CD4-positive, alpha-beta T cell (primary cell): ENCODE measurements at regions of chr9 and their contacts with region 1.

Region 1: DNA sequence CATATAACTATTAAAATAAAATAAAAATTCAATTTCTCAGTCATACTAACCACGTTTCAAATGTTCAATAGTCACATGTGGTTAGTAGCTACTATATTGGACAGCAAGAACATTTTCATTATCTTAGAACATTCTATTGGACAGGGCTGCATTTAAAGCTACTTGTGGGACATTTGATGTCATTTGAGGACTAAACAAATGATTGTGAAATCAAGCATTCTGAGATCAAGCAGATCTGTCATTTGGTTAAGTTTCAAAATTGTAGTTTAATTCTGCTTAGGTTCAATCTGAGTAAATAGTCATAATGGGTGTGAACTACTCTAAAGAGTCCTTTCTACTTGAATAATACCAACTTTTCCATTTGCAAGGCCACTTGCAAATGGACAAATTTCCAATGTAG is 226.9 kb upstream of the C9orf72 start:
- DNase-seq: no peak
- ATAC-seq: no peak
- H3K4me3 ChIP-seq: no peak overlapping the region
- H3K4me3 Mint-ChIP-seq: no peak overlapping the region
- H3K27ac ChIP-seq: no peak overlapping the region
- H3K27ac Mint-ChIP-seq: no peak overlapping the region
- H3K4me1 ChIP-seq: no peaks in the 10 kb centered on the region
- H3K4me1 Mint-ChIP-seq: no peaks in the 10 kb centered on the region
- H3K27me3 ChIP-seq: no peaks in the 10 kb centered on the region
- H3K27me3 Mint-ChIP-seq: peaks cover 9% of the 10 kb centered on the region
- CTCF ChIP-seq: no peak

Region 2: GRCh38 chr9:27749838-27750237 is 50.3 kb before region 1 on chr9:
- CTCF ChIA-PET with region 1: no interaction called
- POLR2A ChIA-PET with region 1: no interaction called
- intact Hi-C with region 1: loop called in 1 of 2 experiments (anchors 10 kb)
- DNase-seq: no peak
- ATAC-seq: no peak
- H3K4me3 ChIP-seq: no peak overlapping the region
- H3K4me3 Mint-ChIP-seq: no peak overlapping the region
- H3K27ac ChIP-seq: no peak overlapping the region
- H3K27ac Mint-ChIP-seq: no peak overlapping the region
- H3K4me1 ChIP-seq: no peaks in the 10 kb centered on the region
- H3K4me1 Mint-ChIP-seq: no peaks in the 10 kb centered on the region
- H3K27me3 ChIP-seq: no peaks in the 10 kb centered on the region
- H3K27me3 Mint-ChIP-seq: peaks cover 12% of the 10 kb centered on the region
- CTCF ChIP-seq: no peak